Activated T-helper 1 cell treated with anti-CD3 and anti-CD28 coated beads, Interleukin-12 subunit alpha, Interleukin-12 subunit beta, Interleukin-2, Interleukin-4 antibody, amounts not matched to agents 30 ng/mL and 10 ng/mL and 1 ng/mL, durations not matched to agents 14 hours and 24 hours and 36 hours (primary cell): ENCODE measurements at regions of chr18 and their contacts with region 1.

Region 1: GRCh38 chr18:11733031-11733430 is 44.0 kb downstream of the GNAL start:
- DNase-seq: peak; percentile 55
- H3K4me3 Mint-ChIP-seq: no peak overlapping the region
- H3K27ac Mint-ChIP-seq: no peak overlapping the region
- H3K4me1 Mint-ChIP-seq: no peaks in the 10 kb centered on the region
- H3K27me3 Mint-ChIP-seq: peaks cover 10% of the 10 kb centered on the region

Region 2: GRCh38 chr18:11669271-11669947 is 63.6 kb before region 1 on chr18:
- intact Hi-C with region 1: no loop called
- DNase-seq: no peak
- H3K4me3 Mint-ChIP-seq: no peak overlapping the region
- H3K27ac Mint-ChIP-seq: no peak overlapping the region
- H3K4me1 Mint-ChIP-seq: no peaks in the 10 kb centered on the region
- H3K27me3 Mint-ChIP-seq: peaks cover 2% of the 10 kb centered on the region

Region 3: GRCh38 chr18:11761553-11761952 is 28.5 kb after region 1 on chr18:
- intact Hi-C with region 1: no loop called
- DNase-seq: no peak
- H3K4me3 Mint-ChIP-seq: no peak overlapping the region
- H3K27ac Mint-ChIP-seq: no peak overlapping the region
- H3K4me1 Mint-ChIP-seq: no peaks in the 10 kb centered on the region
- H3K27me3 Mint-ChIP-seq: peaks cover 13% of the 10 kb centered on the region

Region 4: DNA sequence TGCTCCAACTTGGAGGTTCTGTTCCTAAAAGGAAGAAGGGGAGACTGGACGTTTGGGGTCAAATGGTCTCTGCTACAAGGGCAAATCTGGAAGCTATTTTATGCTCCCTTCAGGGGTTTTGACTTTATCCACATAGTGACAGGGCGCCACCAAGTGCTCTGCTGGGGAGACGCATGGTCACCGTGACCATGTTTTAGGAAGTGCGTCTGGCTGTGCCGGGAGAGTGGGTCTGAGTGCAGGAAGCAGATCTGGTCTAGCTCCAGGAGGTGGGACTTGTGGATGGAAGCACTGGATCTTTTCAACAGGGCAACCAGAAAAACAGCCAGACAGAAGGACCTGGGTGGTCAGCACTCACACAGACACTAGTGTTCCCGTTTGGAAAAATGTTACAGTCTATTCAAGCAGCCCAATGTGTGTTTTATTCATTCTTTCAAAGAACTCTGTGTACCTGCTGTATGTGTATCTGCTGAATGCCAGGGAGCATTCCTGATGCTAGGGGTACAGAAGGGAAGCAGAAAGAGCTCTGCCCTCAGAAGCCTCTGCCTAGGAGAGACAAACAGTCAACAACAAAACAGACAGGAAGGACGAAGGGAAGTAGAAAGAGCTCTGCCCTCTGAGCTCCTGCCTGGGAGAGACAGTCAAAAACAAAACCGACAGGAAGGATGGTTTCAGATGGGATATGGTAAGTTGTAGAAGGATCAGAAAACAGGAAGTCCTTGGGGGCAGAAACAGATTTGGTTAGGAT is 262.6 kb after region 1 on chr18:
- intact Hi-C with region 1: loop called (anchors 1 kb)
- DNase-seq: peak; percentile 41
- H3K4me3 Mint-ChIP-seq: peak overlapping the region; percentile 48
- H3K27ac Mint-ChIP-seq: peak overlapping the region; percentile 57
- H3K4me1 Mint-ChIP-seq: peaks cover 21% of the 10 kb centered on the region
- H3K27me3 Mint-ChIP-seq: no peaks in the 10 kb centered on the region

Region 5: GRCh38 chr18:12038639-12039417 is 305.8 kb after region 1 on chr18:
- intact Hi-C with region 1: loop called (anchors 1 kb)
- DNase-seq: peak; percentile 69
- H3K4me3 Mint-ChIP-seq: peak overlapping the region; percentile 69
- H3K27ac Mint-ChIP-seq: no peak overlapping the region
- H3K4me1 Mint-ChIP-seq: peaks cover 19% of the 10 kb centered on the region
- H3K27me3 Mint-ChIP-seq: peaks cover 5% of the 10 kb centered on the region